ENCODE measurements at regions of chr12 and their contacts with region 1.

Region 1: DNA sequence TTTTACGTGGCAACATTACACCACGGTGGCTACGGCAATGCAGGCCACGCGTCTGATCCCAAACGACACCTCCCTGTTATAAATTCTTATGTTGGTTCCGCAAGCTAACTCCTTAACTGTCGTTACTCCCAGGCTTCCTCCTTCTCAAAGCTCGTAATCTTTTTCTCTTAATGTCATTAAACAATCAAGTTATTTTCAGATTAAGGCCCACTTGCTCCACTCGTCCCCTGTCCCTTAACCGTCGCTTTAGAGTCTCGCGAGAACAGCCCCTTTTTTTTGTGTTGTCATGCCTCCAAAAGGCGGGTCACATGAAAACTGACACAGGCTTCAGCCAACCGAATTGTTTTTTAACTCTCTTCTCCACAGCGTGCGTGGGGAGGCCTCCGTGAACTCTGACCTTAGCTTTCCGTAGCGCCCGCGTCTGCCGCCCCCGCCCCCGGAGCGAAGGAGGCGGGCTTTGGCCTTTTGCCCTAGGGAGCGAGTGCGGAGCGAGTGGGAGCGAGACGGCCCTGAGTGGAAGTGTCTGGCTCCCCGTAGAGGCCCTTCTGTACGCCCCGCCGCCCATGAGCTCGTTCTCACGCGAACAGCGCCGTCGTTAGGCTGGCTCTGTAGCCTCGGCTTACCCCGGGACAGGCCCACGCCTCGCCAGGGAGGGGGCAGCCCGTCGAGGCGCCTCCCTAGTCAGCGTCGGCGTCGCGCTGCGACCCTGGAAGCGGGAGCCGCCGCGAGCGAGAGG is at the start of gene CAND1:
- DNase-seq: peak; percentile 89 to 99 (median 95)
- ATAC-seq: peak; percentile 78
- H3K4me3 ChIP-seq: peak within 1 kb of the TSS; percentile 88 to 92
- H3K4me3 Mint-ChIP-seq: peak within 1 kb of the TSS; percentile 88
- H3K27ac ChIP-seq: peak within 1 kb of the TSS; percentile 68 to 97
- H3K27ac Mint-ChIP-seq: peak within 1 kb of the TSS; percentile 99
- H3K4me1 ChIP-seq: peaks cover 33% of the 10 kb centered on the region
- H3K4me1 Mint-ChIP-seq: peaks cover 48% of the 10 kb centered on the region
- H3K27me3 ChIP-seq: no peaks in the 10 kb centered on the region
- H3K27me3 Mint-ChIP-seq: no peaks in the 10 kb centered on the region
- CTCF ChIP-seq: no peak
- total RNA-seq, gene CAND1: 116 to 130 TPM

Region 2: DNA sequence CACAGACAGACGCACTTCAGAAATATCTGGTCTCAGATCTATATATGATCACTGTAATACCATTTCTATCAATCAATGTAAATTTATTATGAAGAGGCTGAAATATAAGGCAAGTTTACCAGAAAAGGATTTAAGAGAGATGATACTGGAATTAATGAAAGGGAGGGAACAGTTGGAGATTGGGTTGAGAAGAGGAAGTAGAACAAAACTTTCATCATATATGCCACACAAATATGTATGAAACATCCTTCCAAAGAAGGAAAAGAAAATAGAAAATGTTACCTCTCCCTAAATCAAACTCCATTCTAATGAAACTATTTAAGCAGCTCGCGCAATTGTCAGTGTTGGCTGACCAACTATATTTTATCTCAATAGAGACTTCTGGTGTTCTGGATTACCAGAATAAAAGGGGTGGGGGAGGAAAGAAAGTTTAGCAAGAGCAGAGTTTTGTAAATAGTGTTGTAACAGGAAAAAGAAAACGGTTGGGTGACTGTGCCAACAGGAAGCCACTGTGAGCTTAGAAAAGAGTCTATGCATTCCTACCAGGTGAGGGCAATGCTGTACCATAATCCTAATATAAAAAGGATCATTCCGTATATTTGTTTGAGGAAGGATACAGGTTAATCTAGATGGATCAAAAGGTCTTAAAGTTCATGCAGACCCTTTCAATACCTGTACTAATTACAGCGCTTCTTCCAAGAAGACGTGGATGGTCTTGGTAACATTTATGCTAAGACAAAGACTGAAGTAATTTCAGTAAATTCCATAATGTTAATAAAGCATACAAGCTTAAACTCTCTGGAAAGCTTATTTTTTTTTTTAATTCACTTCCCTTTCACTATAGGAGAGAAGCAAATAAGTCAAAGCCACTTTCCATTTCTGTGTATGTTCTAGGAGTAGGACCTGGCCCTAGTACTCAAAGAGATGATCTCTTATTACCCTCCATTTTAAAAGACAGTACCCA is 1124.0 kb before region 1 on chr12:
- CTCF ChIA-PET with region 1: no interaction called
- POLR2A ChIA-PET with region 1: no interaction called
- intact Hi-C with region 1: loop called in 1 of 2 experiments (anchors 10 kb)
- DNase-seq: peak in 2 of 9 experiments; percentile 19 to 42
- ATAC-seq: no peak
- H3K4me3 ChIP-seq: no peak overlapping the region
- H3K4me3 Mint-ChIP-seq: no peak overlapping the region
- H3K27ac ChIP-seq: no peak overlapping the region
- H3K27ac Mint-ChIP-seq: peak overlapping the region; percentile 82
- H3K4me1 ChIP-seq: no peaks in the 10 kb centered on the region
- H3K4me1 Mint-ChIP-seq: peaks cover 21% of the 10 kb centered on the region
- H3K27me3 ChIP-seq: no peaks in the 10 kb centered on the region
- H3K27me3 Mint-ChIP-seq: no peaks in the 10 kb centered on the region
- CTCF ChIP-seq: peak; percentile 35

Region 3: DNA sequence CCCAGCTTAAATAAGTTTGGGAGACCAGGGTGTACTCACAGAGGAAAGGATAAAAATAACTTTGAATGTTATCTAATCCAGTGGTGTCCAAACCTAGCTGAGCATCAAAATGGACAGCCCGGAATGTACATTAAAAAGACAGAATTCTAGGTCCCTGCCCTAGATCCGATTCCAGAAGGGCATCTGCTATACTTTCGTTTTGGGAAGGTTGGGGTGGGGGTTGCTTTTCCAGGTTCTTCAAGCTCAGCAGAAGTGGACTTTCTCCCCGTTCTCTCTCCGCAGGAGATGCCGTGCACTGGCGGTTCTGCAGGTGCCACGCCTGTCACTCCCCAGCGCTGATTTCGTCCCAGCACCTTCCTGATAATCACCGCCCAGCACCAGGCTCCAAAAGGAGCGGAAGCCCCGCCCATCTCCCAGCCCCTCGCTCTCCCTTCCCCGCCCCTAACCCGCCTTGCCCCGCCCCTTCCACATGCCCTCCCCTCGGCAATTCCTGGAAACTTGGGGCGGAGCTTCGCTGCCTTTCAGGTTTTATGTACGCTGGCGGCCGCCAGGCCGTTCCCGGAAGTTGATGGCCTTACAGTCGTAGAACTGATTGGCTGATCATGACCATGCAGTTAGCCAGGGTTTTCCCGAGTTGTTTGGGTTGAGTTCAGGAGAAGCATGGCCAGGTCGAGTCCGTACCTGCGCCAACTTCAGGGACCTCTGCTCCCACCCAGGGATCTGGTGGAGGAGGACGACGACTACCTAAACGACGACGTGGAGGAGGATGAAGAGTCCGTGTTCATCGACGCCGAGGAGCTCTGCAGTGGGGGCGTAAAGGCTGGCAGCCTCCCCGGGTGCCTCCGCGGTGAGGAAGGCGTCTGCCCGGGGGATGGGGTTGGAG is 966.9 kb before region 1 on chr12 and contains the start of gene HELB:
- CTCF ChIA-PET with region 1: no interaction called
- POLR2A ChIA-PET with region 1: no interaction called
- intact Hi-C with region 1: loop called (anchors 2 to 5 kb)
- DNase-seq: peak; percentile 90 to 98 (median 96)
- ATAC-seq: peak; percentile 76
- H3K4me3 ChIP-seq: peak within 1 kb of the TSS; percentile 91 to 97
- H3K4me3 Mint-ChIP-seq: peak within 1 kb of the TSS; percentile 97
- H3K27ac ChIP-seq: peak within 1 kb of the TSS; percentile 77 to 92
- H3K27ac Mint-ChIP-seq: peak within 1 kb of the TSS; percentile 98
- H3K4me1 ChIP-seq: peaks cover 31% of the 10 kb centered on the region
- H3K4me1 Mint-ChIP-seq: peaks cover 47% of the 10 kb centered on the region
- H3K27me3 ChIP-seq: no peaks in the 10 kb centered on the region
- H3K27me3 Mint-ChIP-seq: no peaks in the 10 kb centered on the region
- CTCF ChIP-seq: no peak
- total RNA-seq, gene HELB: 26.9 to 27.0 TPM

Region 4: GRCh38 chr12:67305544-67305943 is 36.5 kb after region 1 on chr12:
- CTCF ChIA-PET with region 1: interaction called, 4 read pairs
- POLR2A ChIA-PET with region 1: no interaction called
- intact Hi-C with region 1: loop called in 1 of 2 experiments (anchors 5 kb)
- DNase-seq: no peak
- ATAC-seq: no peak
- H3K4me3 ChIP-seq: no peak overlapping the region
- H3K4me3 Mint-ChIP-seq: no peak overlapping the region
- H3K27ac ChIP-seq: no peak overlapping the region
- H3K27ac Mint-ChIP-seq: no peak overlapping the region
- H3K4me1 ChIP-seq: no peaks in the 10 kb centered on the region
- H3K4me1 Mint-ChIP-seq: peaks cover 2% of the 10 kb centered on the region
- H3K27me3 ChIP-seq: no peaks in the 10 kb centered on the region
- H3K27me3 Mint-ChIP-seq: no peaks in the 10 kb centered on the region
- CTCF ChIP-seq: no peak

Region 5: GRCh38 chr12:67472539-67472938 is 203.5 kb after region 1 on chr12:
- CTCF ChIA-PET with region 1: no interaction called
- POLR2A ChIA-PET with region 1: no interaction called
- intact Hi-C with region 1: no loop called
- DNase-seq: no peak
- ATAC-seq: no peak
- H3K4me3 ChIP-seq: no peak overlapping the region
- H3K4me3 Mint-ChIP-seq: no peak overlapping the region
- H3K27ac ChIP-seq: no peak overlapping the region
- H3K27ac Mint-ChIP-seq: no peak overlapping the region
- H3K4me1 ChIP-seq: peaks cover 20% of the 10 kb centered on the region
- H3K4me1 Mint-ChIP-seq: peaks cover 27% of the 10 kb centered on the region
- H3K27me3 ChIP-seq: no peaks in the 10 kb centered on the region
- H3K27me3 Mint-ChIP-seq: no peaks in the 10 kb centered on the region
- CTCF ChIP-seq: no peak

Region 6: DNA sequence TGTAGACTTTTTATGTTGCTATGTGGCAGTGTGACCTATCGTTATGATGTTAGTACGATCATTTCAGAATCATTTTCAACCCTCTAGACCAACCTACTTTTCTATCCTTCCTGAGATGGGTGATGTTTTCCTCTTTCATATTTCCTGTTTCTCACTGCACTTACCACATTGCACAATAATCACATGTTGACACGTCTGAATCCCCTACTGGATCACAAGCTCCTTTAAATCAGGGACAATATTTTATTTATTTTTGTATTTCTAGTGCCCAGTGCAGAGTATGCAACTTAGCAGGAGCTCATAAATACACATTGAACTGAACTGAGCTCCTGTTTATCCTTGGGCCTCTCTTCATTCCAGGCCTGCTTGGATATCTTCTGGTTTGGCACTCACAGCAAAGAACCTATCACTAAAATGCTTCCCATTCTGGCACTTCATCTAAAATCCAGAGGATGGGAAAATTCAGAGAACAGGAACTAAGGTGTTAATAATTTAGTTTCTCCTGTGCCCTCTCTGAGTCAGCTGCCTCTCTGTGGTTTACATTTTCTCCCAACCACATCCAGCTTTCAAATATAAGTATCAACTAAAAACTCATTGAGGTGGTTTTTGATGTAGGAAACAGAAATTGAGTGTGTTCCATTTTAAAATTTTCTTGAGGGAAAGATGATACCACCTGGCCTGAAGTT is 310.1 kb after region 1 on chr12:
- CTCF ChIA-PET with region 1: no interaction called
- POLR2A ChIA-PET with region 1: no interaction called
- intact Hi-C with region 1: no loop called
- DNase-seq: peak in 6 of 9 experiments; percentile 4 to 71 (median 28)
- ATAC-seq: peak; percentile 78
- H3K4me3 ChIP-seq: peak overlapping the region; percentile 4 to 21
- H3K4me3 Mint-ChIP-seq: peak overlapping the region; percentile 56
- H3K27ac ChIP-seq: peak overlapping the region; percentile 11 to 76
- H3K27ac Mint-ChIP-seq: peak overlapping the region; percentile 69
- H3K4me1 ChIP-seq: peaks cover 34% of the 10 kb centered on the region
- H3K4me1 Mint-ChIP-seq: peaks cover 57% of the 10 kb centered on the region
- H3K27me3 ChIP-seq: no peaks in the 10 kb centered on the region
- H3K27me3 Mint-ChIP-seq: no peaks in the 10 kb centered on the region
- CTCF ChIP-seq: no peak

Region 7: GRCh38 chr12:68175557-68176061 is 906.5 kb after region 1 on chr12:
- CTCF ChIA-PET with region 1: no interaction called
- POLR2A ChIA-PET with region 1: interaction called, 4 read pairs
- intact Hi-C with region 1: loop called in 1 of 2 experiments (anchors 10 kb)
- DNase-seq: peak; percentile 26 to 95 (median 60)
- ATAC-seq: peak; percentile 86
- H3K4me3 ChIP-seq: peak overlapping the region; percentile 19 to 33
- H3K4me3 Mint-ChIP-seq: peak overlapping the region; percentile 77
- H3K27ac ChIP-seq: peak overlapping the region; percentile 62 to 71
- H3K27ac Mint-ChIP-seq: peak overlapping the region; percentile 95
- H3K4me1 ChIP-seq: peaks cover 66% of the 10 kb centered on the region
- H3K4me1 Mint-ChIP-seq: peaks cover 67% of the 10 kb centered on the region
- H3K27me3 ChIP-seq: no peaks in the 10 kb centered on the region
- H3K27me3 Mint-ChIP-seq: no peaks in the 10 kb centered on the region
- CTCF ChIP-seq: no peak

Region 8: DNA sequence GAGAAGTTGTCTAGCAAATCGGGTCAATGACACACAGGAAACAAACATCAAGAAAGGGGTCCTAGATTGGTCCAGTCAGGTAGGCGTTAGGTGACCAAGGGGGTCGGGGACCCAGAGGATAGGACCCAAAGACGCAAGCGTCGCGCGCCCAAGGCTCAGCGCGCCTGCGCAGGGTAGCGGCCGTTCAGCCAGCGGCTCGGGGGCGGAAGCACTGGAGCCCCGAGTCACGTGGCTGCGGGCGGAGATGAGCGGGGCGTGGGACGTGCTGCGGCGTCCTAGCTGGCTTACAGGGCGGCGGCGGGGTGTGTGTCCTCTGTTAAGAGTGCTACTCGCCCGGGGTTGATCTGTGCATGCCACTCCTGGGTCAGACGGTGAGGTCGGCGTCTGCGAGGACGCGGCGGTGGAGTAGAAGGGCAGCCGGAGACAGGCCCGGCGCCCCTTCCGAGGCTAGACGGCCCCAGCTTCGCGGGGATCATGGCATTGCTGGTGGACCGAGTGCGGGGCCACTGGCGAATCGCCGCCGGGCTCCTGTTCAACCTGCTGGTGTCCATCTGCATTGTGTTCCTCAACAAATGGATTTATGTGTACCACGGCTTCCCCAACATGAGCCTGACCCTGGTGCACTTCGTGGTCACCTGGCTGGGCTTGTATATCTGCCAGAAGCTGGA is 1477.0 kb after region 1 on chr12 and contains the start of gene SLC35E3:
- CTCF ChIA-PET with region 1: no interaction called
- POLR2A ChIA-PET with region 1: no interaction called
- intact Hi-C with region 1: loop called (anchors 2 to 10 kb)
- DNase-seq: peak; percentile 83 to 95 (median 90)
- ATAC-seq: peak; percentile 96
- H3K4me3 ChIP-seq: peak within 1 kb of the TSS; percentile 80 to 96
- H3K4me3 Mint-ChIP-seq: peak within 1 kb of the TSS; percentile 98
- H3K27ac ChIP-seq: peak within 1 kb of the TSS; percentile 73 to 76
- H3K27ac Mint-ChIP-seq: peak within 1 kb of the TSS; percentile 97
- H3K4me1 ChIP-seq: peaks cover 21% of the 10 kb centered on the region
- H3K4me1 Mint-ChIP-seq: peaks cover 48% of the 10 kb centered on the region
- H3K27me3 ChIP-seq: no peaks in the 10 kb centered on the region
- H3K27me3 Mint-ChIP-seq: no peaks in the 10 kb centered on the region
- CTCF ChIP-seq: no peak
- total RNA-seq, gene SLC35E3: 4.0 to 5.7 TPM

Measured in CD8-positive, alpha-beta T cell (primary cell).